Pancreas (tissue), 10 donors: ENCODE measurements at regions of chr13 and their contacts with region 1.

Region 1: DNA sequence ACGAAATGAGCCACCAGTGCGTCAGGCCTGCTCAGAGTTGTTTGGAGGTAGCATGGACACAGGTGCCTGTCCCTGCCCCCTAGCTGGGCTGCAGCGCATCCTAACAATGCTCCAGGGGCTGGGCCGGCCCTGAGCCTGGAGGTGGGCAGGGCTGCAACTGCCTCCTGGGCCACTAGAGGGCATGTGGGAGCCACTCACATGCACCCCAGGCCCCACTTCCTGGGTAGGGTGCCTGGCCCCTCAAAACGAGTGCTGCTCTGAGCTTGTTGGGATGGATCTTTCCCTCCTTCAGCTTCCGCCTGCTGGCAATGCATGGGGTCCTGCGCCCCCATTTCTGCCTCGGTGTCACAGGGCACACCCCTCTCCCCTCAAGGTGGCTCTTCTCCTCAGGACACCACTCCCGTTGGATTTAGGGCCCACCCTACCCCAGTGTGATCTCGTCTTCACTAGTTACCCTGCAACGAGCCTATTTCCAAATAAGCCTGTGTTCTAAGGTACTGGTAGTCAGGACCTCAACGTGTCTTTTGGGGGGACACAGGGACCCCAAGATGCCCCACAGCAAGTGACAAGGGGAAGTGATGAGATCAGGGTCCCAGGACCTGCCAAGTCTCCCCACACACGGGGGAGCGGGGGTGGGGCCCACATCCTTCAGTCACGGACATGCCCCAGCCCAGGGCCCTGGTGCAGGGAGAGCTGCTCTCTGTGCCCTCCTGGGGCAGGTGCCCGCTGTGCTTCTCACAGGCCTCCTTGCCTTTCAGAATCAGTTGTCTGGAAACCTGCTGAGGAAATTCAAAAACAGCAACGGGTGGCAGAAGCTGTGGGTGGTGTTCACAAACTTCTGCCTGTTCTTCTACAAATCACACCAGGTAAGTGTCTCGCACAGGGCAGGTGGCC is 131.3 kb downstream of the STK24 start:
- DNase-seq: peak; percentile 47 to 87 (median 75)
- ATAC-seq: peak; percentile 82 to 93 (median 88)
- H3K4me3 ChIP-seq: no peak overlapping the region
- H3K27ac ChIP-seq: peak overlapping the region in 1 of 4 donors; percentile 30
- H3K4me1 ChIP-seq: no peaks in the 10 kb centered on the region
- H3K27me3 ChIP-seq: no peaks in the 10 kb centered on the region
- CTCF ChIP-seq: peak; percentile 93 to 97 (median 96)

Region 2: DNA sequence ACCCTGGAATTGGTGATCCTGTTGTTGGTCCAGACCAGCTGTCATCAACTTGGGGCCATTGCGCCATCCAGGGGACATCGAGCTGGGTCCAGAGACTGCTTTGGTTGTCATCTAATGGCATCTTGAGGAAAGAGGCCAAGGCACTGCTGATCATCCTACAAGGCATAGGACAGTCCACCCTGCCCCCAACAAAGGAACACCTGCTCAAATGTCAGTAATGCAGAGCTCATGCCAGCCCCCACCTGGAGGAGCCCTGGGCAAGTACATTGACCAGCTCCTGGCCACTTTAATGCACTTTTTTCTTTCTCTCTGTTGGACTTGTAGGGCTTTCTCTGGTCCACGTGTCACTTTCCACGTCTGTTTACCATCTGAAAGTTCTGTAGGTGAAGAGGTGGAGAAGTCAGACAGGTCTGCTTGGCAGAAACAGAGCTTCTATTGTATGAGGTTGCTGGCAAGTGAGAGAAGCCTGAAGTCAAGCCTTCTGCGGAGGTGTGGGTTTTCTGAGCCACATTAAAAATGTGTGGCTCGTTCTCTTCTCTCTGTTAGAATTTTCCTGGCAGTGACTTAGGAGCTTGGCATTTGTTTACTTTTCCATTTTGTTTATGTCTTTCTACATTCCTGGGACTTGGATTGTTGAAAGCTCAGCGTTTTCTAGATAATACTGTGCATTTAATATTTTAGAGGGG is 144.5 kb before region 1 on chr13:
- intact Hi-C with region 1: no loop called
- DNase-seq: peak in 2 of 6 donors; percentile 25 to 48
- ATAC-seq: peak; percentile 72 to 89 (median 82)
- H3K4me3 ChIP-seq: no peak overlapping the region
- H3K27ac ChIP-seq: peak overlapping the region in 2 of 4 donors; percentile 67 to 79
- H3K4me1 ChIP-seq: peaks cover 15 to 31% (median 30%) of the 10 kb centered on the region in 3 donors
- H3K27me3 ChIP-seq: no peaks in the 10 kb centered on the region
- CTCF ChIP-seq: no peak

Region 3: DNA sequence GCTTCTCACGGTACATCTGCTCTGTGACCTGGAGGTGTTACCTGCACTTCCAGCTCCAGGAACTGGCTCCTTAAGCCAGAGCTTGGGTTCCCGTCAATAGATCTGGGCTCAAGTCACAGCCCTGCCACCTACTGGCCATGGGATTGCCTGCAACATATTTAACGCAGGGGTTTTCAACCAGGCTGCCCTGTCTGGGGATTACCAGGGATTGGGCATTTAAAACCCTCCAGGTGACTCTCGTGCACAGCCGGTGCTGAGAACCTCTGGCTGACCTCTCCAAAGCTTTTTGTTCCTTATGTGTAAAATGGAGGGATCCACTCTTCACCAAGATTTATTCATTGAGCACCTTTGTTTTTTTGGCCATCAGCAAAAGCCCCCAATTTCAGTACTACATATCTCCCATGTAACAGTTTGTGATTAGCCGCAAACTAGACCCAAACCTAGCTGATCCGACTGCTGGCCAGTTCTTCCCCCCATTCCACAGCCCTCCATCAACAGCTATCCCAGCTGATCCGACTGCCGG is 207.9 kb after region 1 on chr13:
- intact Hi-C with region 1: loop called in 2 of 3 experiments (anchors 5 to 10 kb)
- DNase-seq: peak; percentile 78 to 88 (median 84)
- ATAC-seq: peak; percentile 87 to 96 (median 92)
- H3K4me3 ChIP-seq: no peak overlapping the region
- H3K27ac ChIP-seq: no peak overlapping the region
- H3K4me1 ChIP-seq: peaks cover 0 to 20% (median 5%) of the 10 kb centered on the region in 3 donors
- H3K27me3 ChIP-seq: no peaks in the 10 kb centered on the region
- CTCF ChIP-seq: peak; percentile 68 to 84 (median 76)

Region 4: DNA sequence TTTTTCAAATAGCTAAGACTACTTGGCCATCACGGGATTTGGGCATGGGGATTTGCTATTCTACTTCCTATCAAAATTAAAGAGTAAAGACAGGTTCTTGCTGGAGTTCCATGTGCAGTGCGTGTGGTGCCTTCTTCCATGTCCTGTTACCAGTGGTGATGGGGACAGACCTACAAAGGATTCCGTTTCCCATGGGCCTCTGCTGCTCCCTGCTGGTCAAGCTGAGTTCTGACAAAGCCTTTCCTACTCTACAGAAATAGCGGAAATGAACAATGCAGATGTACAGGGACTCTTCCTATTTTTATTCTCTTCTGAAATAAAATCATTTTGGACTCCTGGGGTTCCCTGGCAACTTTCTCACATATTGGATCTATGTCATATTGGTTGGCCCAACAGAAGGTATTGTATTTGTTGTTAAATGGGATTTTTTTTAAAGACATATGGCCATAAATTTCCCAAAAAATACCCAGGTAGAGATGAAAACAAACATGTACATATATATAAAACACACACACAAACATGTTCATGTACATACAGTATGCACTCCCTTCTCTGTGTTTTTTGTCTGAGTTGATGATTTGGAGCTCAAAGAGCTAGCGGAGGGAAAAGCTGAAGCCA is 397.4 kb after region 1 on chr13:
- intact Hi-C with region 1: loop called in 1 of 3 experiments (anchors 10 kb)
- DNase-seq: peak; percentile 69 to 83 (median 78)
- ATAC-seq: peak; percentile 91 to 95 (median 95)
- H3K4me3 ChIP-seq: no peak overlapping the region
- H3K27ac ChIP-seq: no peak overlapping the region
- H3K4me1 ChIP-seq: peaks cover 0 to 3% (median 0%) of the 10 kb centered on the region in 3 donors
- H3K27me3 ChIP-seq: no peaks in the 10 kb centered on the region
- CTCF ChIP-seq: peak; percentile 73 to 85 (median 78)